Esophagus squamous epithelium (tissue), 5 donors: ENCODE measurements at regions of chr11 and their contacts with region 1.

Region 1: GRCh38 chr11:112280268-112281126 is 19.8 kb upstream of the PLET1 start:
- DNase-seq: no peak
- H3K4me3 ChIP-seq: peak overlapping the region; percentile 26 to 66 (median 44)
- H3K27ac ChIP-seq: peak overlapping the region; percentile 25 to 59 (median 56)
- H3K4me1 ChIP-seq: peaks cover 0 to 8% (median 5%) of the 10 kb centered on the region in 3 donors
- H3K27me3 ChIP-seq: no peaks in the 10 kb centered on the region
- CTCF ChIP-seq: peak; percentile 22 to 85 (median 78)
- POLR2A ChIP-seq: no peak

Region 2: GRCh38 chr11:112150517-112150916 is 130.0 kb before region 1 on chr11:
- intact Hi-C with region 1: no loop called
- DNase-seq: no peak
- H3K4me3 ChIP-seq: no peak overlapping the region
- H3K27ac ChIP-seq: no peak overlapping the region
- H3K4me1 ChIP-seq: no peaks in the 10 kb centered on the region
- H3K27me3 ChIP-seq: no peaks in the 10 kb centered on the region
- CTCF ChIP-seq: no peak
- POLR2A ChIP-seq: no peak

Region 3: DNA sequence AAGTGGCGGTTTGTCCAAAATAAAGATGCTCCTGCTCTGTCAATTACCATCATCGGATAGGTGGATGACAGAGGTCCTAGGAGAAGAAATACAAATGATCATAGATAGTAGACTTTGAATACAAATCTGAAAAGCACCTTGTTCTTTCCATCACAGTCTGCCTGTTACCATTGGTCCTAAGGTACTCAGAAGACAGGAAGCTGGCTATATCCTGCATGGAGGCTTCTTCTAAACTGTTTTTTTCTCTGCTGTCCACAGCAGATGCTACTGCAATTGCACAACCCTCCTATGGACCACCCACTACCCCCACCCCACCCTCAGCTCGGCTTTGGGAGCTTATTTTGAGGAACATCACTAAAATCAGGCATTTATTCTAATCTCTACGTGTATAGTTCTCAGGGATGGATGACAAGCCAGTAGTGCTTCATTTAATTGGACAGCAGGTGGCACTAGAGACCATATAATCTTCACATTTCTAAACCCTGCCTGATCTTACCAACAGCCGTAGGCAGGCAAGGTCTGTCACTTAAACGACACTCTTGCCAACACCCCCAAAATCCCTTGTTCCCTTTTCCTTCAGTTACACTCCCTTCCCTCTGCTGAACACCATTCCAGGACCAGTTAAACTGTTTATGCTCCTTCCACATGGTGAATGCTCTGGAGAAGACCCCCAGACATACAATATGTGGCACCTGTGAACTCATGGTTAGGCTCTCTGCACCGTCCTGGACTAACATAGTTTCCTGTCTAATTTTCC is 60.8 kb before region 1 on chr11:
- intact Hi-C with region 1: loop called (anchors 5 kb)
- DNase-seq: no peak
- H3K4me3 ChIP-seq: no peak overlapping the region
- H3K27ac ChIP-seq: no peak overlapping the region
- H3K4me1 ChIP-seq: peaks cover 6 to 39% (median 16%) of the 10 kb centered on the region in 3 donors
- H3K27me3 ChIP-seq: no peaks in the 10 kb centered on the region
- CTCF ChIP-seq: peak; percentile 53 to 89 (median 88)
- POLR2A ChIP-seq: no peak

Region 4: GRCh38 chr11:112555491-112556364 is 275.2 kb after region 1 on chr11:
- intact Hi-C with region 1: loop called (anchors 10 kb)
- DNase-seq: no peak
- H3K4me3 ChIP-seq: no peak overlapping the region
- H3K27ac ChIP-seq: no peak overlapping the region
- H3K4me1 ChIP-seq: peaks cover 0 to 4% (median 0%) of the 10 kb centered on the region in 3 donors
- H3K27me3 ChIP-seq: no peaks in the 10 kb centered on the region
- CTCF ChIP-seq: peak; percentile 28 to 65 (median 55)
- POLR2A ChIP-seq: no peak

Region 5: GRCh38 chr11:113289431-113290187 is 1009.1 kb after region 1 on chr11:
- intact Hi-C with region 1: loop called (anchors 5 kb)
- DNase-seq: no peak
- H3K4me3 ChIP-seq: no peak overlapping the region
- H3K27ac ChIP-seq: no peak overlapping the region
- H3K4me1 ChIP-seq: no peaks in the 10 kb centered on the region
- H3K27me3 ChIP-seq: peaks cover 0 to 21% (median 0%) of the 10 kb centered on the region in 4 donors
- CTCF ChIP-seq: peak; percentile 59 to 91 (median 76)
- POLR2A ChIP-seq: no peak